ENCODE measurements at regions of chr20 and their contacts with region 1.

Region 1: DNA sequence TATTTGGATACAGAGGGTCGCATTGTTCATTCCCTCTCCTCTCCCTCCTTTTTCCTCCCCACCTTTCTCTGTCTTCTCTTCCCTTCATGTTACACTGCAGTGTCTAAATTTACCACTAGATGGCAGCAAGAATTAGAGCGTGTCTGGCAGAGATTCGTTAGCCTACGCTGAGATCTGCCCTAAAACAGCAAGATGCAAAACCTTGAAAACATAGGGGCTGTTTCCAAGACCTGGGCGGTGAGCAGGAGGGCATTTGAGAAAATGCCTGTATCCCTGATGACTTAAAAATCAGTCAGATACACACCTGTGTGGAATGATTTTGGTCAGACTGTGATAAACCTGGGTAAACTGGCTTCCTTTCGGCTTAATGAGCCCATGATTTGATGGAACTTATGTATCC is 101.5 kb upstream of the ISM1 start:
- DNase-seq: peak; percentile 41
- CTCF ChIP-seq: peak; percentile 84

Region 2: GRCh38 chr20:13022401-13023155 is 97.0 kb before region 1 on chr20:
- in situ Hi-C with region 1: no loop called
- DNase-seq: no peak
- CTCF ChIP-seq: no peak

Region 3: DNA sequence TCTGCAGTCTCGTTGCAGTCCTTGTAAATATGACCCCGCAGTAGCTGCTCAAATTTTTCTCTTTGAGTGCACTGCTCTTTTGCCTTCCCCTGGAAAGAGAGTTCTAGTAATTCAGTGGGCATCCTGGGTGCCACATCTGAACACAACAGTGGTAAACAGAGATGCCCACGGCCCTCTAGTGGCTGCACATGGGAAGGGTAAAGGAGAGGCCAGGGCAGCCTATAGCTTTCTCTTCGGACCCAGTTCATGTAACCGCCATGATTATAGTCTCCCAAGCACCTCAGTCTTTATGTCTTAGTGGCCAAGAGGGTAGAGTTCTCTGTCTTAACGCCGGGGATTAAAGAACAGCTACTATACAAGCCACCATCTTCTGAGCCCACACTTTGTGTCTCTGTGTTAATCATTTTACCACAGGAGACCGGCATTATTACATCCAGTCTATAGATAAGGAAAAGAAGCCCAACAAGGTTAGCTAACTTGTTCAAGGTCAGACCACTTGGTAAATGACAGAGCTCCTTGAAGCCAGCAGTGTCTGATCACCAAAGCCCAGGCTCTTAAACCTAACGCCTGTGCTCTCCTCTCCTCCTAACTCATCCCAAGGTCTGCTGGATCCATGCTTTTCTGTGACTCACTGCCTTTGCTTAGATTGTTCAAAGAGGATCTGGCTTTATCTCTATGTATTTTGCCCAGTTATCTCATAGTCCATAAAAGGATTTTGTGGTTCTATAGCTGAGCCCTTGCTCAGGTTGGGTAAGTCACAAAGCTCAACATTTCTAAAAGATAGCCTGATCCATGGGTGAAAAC is 183.3 kb after region 1 on chr20:
- in situ Hi-C with region 1: loop called (anchors 10 kb)
- DNase-seq: peak; percentile 44
- CTCF ChIP-seq: peak; percentile 47

Region 4: DNA sequence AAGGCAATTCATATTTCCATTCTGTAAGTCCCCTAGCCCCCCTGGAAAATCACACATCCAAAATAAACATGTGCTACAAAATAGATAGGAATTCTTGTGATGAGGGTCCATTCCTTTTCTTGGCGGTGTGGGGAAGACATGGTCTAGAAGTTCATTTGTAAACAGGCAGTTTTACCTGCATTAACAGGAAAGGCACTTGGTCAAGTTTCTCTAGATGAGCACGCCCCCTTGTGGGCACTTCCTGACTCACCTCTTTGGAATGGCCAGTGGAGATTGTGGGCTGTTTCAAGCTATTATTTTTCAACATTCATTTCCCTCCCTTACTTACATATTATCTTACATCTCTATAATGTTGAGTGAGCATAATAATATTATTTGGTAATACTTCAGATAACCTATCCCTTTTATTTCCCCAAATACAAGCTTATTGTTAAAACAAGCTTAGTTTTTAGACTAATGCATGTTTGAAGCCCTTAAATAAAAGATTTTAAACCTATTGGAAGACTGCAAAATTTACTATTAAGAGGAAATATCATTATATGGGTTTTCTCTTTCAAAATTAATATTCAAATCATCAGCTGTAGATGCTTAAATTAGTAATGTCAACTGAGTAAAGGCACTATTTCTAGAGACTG is 427.0 kb after region 1 on chr20:
- in situ Hi-C with region 1: loop called (anchors 25 kb)
- DNase-seq: peak; percentile 27
- CTCF ChIP-seq: peak; percentile 79